ENCODE measurements at regions of chr4 and their contacts with region 1.

Region 1: GRCh38 chr4:99949034-99949998 is 759 bp downstream of the H2AZ1 start:
- DNase-seq: peak; percentile 69
- ATAC-seq: peak; percentile 32
- H3K4me3 Mint-ChIP-seq: no peak overlapping the region
- H3K27ac Mint-ChIP-seq: no peak overlapping the region
- H3K4me1 Mint-ChIP-seq: peaks cover 31% of the 10 kb centered on the region
- H3K27me3 Mint-ChIP-seq: no peaks in the 10 kb centered on the region
- CTCF ChIP-seq: no peak

Region 2: DNA sequence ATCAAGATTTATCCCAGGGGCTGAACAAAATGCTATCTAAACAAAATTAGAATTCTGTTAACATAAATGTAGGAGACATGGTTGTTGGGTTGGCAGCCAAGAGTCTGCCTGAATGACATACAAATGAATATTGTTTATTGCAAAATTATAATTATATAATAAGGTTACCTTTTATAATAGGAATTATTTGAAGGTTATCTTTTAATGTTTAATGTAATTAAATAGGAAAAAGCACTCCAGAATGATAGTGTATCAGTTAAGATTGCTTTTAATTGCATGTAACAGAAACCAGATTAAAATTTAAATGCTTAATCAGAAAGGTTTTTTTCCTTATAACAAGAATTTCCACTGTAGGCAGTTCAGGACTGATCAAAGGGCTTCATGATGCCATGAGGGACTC is 1764.0 kb before region 1 on chr4:
- CTCF ChIA-PET with region 1: no interaction called
- POLR2A ChIA-PET with region 1: no interaction called
- intact Hi-C with region 1: no loop called
- DNase-seq: no peak
- ATAC-seq: no peak
- H3K4me3 Mint-ChIP-seq: no peak overlapping the region
- H3K27ac Mint-ChIP-seq: no peak overlapping the region
- H3K4me1 Mint-ChIP-seq: peaks cover 4% of the 10 kb centered on the region
- H3K27me3 Mint-ChIP-seq: no peaks in the 10 kb centered on the region
- CTCF ChIP-seq: no peak

Region 3: GRCh38 chr4:98203332-98204235 is 1745.7 kb before region 1 on chr4:
- CTCF ChIA-PET with region 1: no interaction called
- POLR2A ChIA-PET with region 1: no interaction called
- intact Hi-C with region 1: loop called (anchors 5 kb)
- DNase-seq: no peak
- ATAC-seq: peak; percentile 82
- H3K4me3 Mint-ChIP-seq: peak overlapping the region; percentile 62
- H3K27ac Mint-ChIP-seq: peak overlapping the region; percentile 86
- H3K4me1 Mint-ChIP-seq: peaks cover 37% of the 10 kb centered on the region
- H3K27me3 Mint-ChIP-seq: no peaks in the 10 kb centered on the region
- CTCF ChIP-seq: no peak

Region 4: GRCh38 chr4:99088481-99089365 is 860.6 kb before region 1 on chr4 and contains the start of gene ADH5:
- CTCF ChIA-PET with region 1: no interaction called
- POLR2A ChIA-PET with region 1: interaction called, 8 read pairs
- intact Hi-C with region 1: loop called (anchors 1 kb)
- DNase-seq: peak; percentile 77
- ATAC-seq: peak; percentile 95
- H3K4me3 Mint-ChIP-seq: peak within 1 kb of the TSS; percentile 99
- H3K27ac Mint-ChIP-seq: peak within 1 kb of the TSS; percentile 99
- H3K4me1 Mint-ChIP-seq: peaks cover 41% of the 10 kb centered on the region
- H3K27me3 Mint-ChIP-seq: no peaks in the 10 kb centered on the region
- CTCF ChIP-seq: no peak
- total RNA-seq, gene ADH5: 70.1 and 74.2 TPM in 2 replicates

Region 5: GRCh38 chr4:99808260-99808857 is 141.0 kb before region 1 on chr4:
- CTCF ChIA-PET with region 1: interaction called, 31 read pairs
- POLR2A ChIA-PET with region 1: interaction called, 8 read pairs
- intact Hi-C with region 1: loop called (anchors 1 kb)
- DNase-seq: peak; percentile 45
- ATAC-seq: peak; percentile 94
- H3K4me3 Mint-ChIP-seq: peak overlapping the region; percentile 9
- H3K27ac Mint-ChIP-seq: peak overlapping the region; percentile 60
- H3K4me1 Mint-ChIP-seq: peaks cover 31% of the 10 kb centered on the region
- H3K27me3 Mint-ChIP-seq: peaks cover 10% of the 10 kb centered on the region
- CTCF ChIP-seq: peak; percentile 24

Region 6: GRCh38 chr4:99894161-99894997 is 54.9 kb before region 1 on chr4 and contains the start of gene LAMTOR3:
- CTCF ChIA-PET with region 1: interaction called, 7 read pairs
- POLR2A ChIA-PET with region 1: interaction called, 57 read pairs
- intact Hi-C with region 1: loop called (anchors 1 kb)
- DNase-seq: peak; percentile 78
- ATAC-seq: peak; percentile 98
- H3K4me3 Mint-ChIP-seq: peak within 1 kb of the TSS; percentile 94
- H3K27ac Mint-ChIP-seq: peak within 1 kb of the TSS; percentile 90
- H3K4me1 Mint-ChIP-seq: peaks cover 26% of the 10 kb centered on the region
- H3K27me3 Mint-ChIP-seq: no peaks in the 10 kb centered on the region
- CTCF ChIP-seq: no peak
- total RNA-seq, gene LAMTOR3: 21.9 and 23.8 TPM in 2 replicates

Measured in activated B cell treated with CpG ODN at 0.5 μM for 24 hours (primary cell).